Breast epithelium (tissue), 4 donors: ENCODE measurements at regions of chr6 and their contacts with region 1.

Region 1: DNA sequence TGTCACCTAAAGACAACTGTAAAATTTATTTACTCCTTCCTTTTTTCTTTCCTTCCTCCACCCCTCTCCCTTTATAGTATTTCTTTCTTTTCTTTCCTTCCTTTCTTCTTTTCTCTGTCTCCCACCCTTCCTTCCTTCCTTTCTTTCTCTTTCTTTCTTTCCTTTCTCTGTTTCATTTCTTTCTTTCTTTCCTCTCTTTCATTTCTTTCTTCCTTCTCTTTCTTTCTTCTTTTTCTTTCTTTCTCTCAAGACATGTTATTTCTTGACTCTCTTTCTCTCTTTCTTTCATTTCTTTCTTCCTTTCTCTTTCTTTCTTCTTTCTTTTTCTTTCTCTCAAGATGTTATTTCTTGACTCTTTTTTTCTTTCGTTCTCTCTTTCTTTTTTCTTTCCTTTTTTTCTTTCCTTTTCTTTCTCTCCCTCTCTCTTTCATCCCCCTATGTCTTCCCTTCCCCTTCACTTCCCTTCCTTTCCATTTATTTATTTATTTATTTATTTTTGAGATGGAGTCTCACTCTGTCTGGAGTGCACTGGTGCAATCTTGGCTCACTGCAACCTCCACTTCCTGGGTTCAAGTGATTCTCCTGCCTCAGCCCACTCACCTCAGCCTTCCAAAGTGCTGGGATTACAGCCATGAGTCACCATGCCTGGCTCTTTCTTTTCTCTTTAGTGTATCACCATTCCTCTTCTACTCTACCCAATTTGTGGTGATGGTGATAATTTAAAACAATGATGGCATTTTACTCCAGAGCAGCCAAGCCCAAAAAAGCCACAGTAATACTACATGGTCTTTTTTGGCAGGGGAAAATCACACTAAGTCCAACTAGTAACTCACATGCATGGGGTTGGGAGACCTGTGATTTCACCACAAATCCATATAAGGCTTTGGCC is 188.2 kb downstream of the ADGRG6 start:
- DNase-seq: no peak
- H3K4me3 ChIP-seq: no peak overlapping the region
- H3K27ac ChIP-seq: no peak overlapping the region
- H3K4me1 ChIP-seq: no peaks in the 10 kb centered on the region
- H3K27me3 ChIP-seq: no peaks in the 10 kb centered on the region
- CTCF ChIP-seq: no peak
- POLR2A ChIP-seq: no peak

Region 2: GRCh38 chr6:142444881-142445301 is 45.1 kb before region 1 on chr6:
- intact Hi-C with region 1: no loop called
- DNase-seq: no peak
- H3K4me3 ChIP-seq: no peak overlapping the region
- H3K27ac ChIP-seq: no peak overlapping the region
- H3K4me1 ChIP-seq: no peaks in the 10 kb centered on the region
- H3K27me3 ChIP-seq: no peaks in the 10 kb centered on the region
- CTCF ChIP-seq: no peak
- POLR2A ChIP-seq: no peak

Region 3: GRCh38 chr6:142523515-142524375 is 33.8 kb after region 1 on chr6:
- intact Hi-C with region 1: no loop called
- DNase-seq: no peak
- H3K4me3 ChIP-seq: no peak overlapping the region
- H3K27ac ChIP-seq: no peak overlapping the region
- H3K4me1 ChIP-seq: no peaks in the 10 kb centered on the region
- H3K27me3 ChIP-seq: no peaks in the 10 kb centered on the region
- CTCF ChIP-seq: no peak
- POLR2A ChIP-seq: no peak

Region 4: DNA sequence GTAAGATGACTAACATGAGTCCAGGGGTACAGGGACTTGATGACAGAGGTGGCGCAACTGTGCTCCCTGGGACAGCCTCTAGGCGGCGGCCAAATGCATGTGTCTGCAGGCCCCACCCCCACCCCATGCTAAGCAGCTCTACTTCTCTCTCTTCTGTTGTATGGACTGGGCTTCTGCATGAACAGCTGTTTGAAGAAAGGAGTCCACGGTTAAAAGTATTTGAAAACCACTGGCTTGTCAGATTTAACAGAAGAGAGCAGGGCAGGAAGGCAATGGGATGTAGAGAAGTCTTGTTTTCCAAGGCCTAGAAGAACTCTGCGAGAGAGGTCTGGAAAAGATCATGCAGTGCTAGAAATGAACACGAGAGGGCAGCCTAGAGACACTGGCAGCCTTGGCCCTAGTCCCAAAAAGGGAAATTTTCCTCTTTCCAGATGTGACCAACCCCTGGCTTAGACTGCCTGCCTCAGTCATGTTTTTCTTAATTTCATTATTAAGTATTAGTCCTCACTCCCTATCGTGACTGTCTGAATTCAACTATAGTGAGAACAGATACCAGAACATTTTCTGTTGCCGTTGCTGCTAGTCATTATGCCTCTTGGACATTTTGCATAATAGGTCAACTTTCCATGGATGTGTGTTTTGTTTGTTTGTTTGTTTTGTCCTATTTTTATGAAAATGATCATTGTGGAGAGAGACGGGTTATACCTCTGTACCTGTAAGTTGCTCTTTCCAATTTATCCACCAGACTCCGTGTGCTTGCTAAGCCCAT is 76.8 kb after region 1 on chr6:
- intact Hi-C with region 1: no loop called
- DNase-seq: peak in 1 of 2 donors; percentile 21
- H3K4me3 ChIP-seq: no peak overlapping the region
- H3K27ac ChIP-seq: peak overlapping the region in 1 of 2 donors; percentile 13
- H3K4me1 ChIP-seq: no peaks in the 10 kb centered on the region
- H3K27me3 ChIP-seq: no peaks in the 10 kb centered on the region
- CTCF ChIP-seq: peak; percentile 51 to 67 (median 65)
- POLR2A ChIP-seq: no peak

Region 5: DNA sequence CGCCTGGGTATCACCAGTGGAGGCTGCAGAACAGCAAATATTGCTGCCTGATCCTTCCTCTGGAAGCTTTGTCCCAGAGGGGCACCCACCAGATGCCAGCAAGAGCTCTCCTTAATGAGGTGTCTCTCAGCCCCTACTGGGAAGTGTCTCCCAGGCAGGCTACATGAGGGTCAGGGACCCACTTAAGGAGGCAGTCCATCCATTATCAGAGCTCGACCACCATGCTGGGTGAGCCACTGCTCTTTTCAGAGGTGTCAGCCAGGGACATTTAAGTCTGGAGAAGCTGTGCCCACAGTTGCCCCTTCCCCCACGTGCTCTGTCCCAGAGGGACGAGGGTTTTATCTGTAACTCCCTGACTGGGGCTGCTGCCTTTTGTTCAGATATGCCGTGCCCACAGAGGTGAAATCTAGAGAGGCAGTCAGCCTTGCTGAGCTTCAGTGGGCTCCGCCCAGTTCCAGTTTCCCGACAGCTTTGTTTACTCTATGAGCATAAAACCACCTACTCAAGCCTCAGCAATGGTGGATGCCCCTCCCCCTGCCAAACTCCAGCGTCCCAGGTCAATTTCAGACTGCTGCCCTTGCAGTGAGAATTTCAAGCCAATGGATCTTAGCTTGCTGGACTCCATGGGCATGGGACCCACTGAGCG is 544.8 kb after region 1 on chr6:
- intact Hi-C with region 1: loop called (anchors 5 kb)
- DNase-seq: no peak
- H3K4me3 ChIP-seq: no peak overlapping the region
- H3K27ac ChIP-seq: no peak overlapping the region
- H3K4me1 ChIP-seq: no peaks in the 10 kb centered on the region
- H3K27me3 ChIP-seq: no peaks in the 10 kb centered on the region
- CTCF ChIP-seq: no peak
- POLR2A ChIP-seq: no peak